Activated naive CD4-positive, alpha-beta T cell treated with anti-CD3 and anti-CD28 coated beads for 36 hours (primary cell): ENCODE measurements at regions of chr20 and their contacts with region 1.

Region 1: GRCh38 chr20:43975096-43975768 is 60.6 kb downstream of the TOX2 start:
- DNase-seq: peak; percentile 66
- H3K4me3 Mint-ChIP-seq: no peak overlapping the region
- H3K27ac Mint-ChIP-seq: peak overlapping the region; percentile 66
- H3K4me1 Mint-ChIP-seq: peaks cover 25% of the 10 kb centered on the region
- H3K27me3 Mint-ChIP-seq: no peaks in the 10 kb centered on the region

Region 2: DNA sequence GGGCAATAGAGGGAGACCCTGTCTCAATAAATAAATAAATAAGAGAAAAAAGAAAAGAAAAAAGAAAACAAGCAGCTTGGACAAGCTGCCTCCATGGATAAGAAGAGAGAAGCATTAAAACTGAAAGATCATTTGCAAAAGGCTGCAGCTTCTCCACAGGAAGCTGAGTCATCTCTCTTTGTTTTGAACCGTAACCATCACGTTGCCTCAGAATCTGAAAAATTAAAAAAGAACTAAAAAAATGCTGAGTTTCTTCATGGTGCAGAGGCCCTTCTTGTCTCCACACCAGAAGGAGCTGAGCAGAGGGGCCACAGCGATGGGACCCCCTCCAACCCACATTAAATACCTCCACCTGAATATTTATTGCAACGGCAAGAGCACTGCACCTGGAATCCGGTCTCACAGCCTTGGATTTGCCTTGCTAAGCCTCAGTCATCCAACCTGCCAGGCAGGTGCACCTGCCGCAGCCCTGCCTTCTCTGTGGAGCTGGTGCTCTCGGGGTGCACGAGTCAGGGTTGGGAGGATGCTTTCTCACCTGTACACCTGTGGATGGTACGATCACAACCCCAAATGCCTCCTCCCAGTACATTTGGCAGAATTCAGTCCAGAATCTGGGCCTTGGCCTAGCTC is 32.5 kb before region 1 on chr20:
- CTCF ChIA-PET with region 1: no interaction called
- intact Hi-C with region 1: loop called (anchors 1 kb)
- DNase-seq: peak; percentile 33
- H3K4me3 Mint-ChIP-seq: no peak overlapping the region
- H3K27ac Mint-ChIP-seq: peak overlapping the region; percentile 77
- H3K4me1 Mint-ChIP-seq: peaks cover 41% of the 10 kb centered on the region
- H3K27me3 Mint-ChIP-seq: peaks cover 8% of the 10 kb centered on the region